Naive thymus-derived CD4-positive, alpha-beta T cell (primary cell): ENCODE measurements at regions of chr5 and their contacts with region 1.

Region 1: GRCh38 chr5:157917899-157918809 is 59.2 kb upstream of the CLINT1 start:
- DNase-seq: peak; percentile 11 to 56 (median 22)
- ATAC-seq: peak; percentile 75
- H3K4me3 ChIP-seq: no peak overlapping the region
- H3K4me3 Mint-ChIP-seq: peak overlapping the region in 9 of 10 donors; percentile 7 to 87 (median 71)
- H3K27ac ChIP-seq: peak overlapping the region; percentile 31
- H3K27ac Mint-ChIP-seq: peak overlapping the region; percentile 40 to 90 (median 83)
- H3K4me1 ChIP-seq: peaks cover 5 to 11% of the 10 kb centered on the region in 2 donors
- H3K4me1 Mint-ChIP-seq: peaks cover 17 to 30% (median 28%) of the 10 kb centered on the region in 7 donors
- H3K27me3 ChIP-seq: no peaks in the 10 kb centered on the region
- H3K27me3 Mint-ChIP-seq: no peaks in the 10 kb centered on the region

Region 2: GRCh38 chr5:157785801-157786200 is 132.4 kb before region 1 on chr5:
- CTCF ChIA-PET with region 1: no interaction called
- POLR2A ChIA-PET with region 1: no interaction called
- intact Hi-C with region 1: no loop called
- DNase-seq: no peak
- ATAC-seq: no peak
- H3K4me3 ChIP-seq: no peak overlapping the region
- H3K4me3 Mint-ChIP-seq: no peak overlapping the region
- H3K27ac ChIP-seq: no peak overlapping the region
- H3K27ac Mint-ChIP-seq: no peak overlapping the region
- H3K4me1 ChIP-seq: no peaks in the 10 kb centered on the region
- H3K4me1 Mint-ChIP-seq: no peaks in the 10 kb centered on the region
- H3K27me3 ChIP-seq: no peaks in the 10 kb centered on the region
- H3K27me3 Mint-ChIP-seq: no peaks in the 10 kb centered on the region

Region 3: DNA sequence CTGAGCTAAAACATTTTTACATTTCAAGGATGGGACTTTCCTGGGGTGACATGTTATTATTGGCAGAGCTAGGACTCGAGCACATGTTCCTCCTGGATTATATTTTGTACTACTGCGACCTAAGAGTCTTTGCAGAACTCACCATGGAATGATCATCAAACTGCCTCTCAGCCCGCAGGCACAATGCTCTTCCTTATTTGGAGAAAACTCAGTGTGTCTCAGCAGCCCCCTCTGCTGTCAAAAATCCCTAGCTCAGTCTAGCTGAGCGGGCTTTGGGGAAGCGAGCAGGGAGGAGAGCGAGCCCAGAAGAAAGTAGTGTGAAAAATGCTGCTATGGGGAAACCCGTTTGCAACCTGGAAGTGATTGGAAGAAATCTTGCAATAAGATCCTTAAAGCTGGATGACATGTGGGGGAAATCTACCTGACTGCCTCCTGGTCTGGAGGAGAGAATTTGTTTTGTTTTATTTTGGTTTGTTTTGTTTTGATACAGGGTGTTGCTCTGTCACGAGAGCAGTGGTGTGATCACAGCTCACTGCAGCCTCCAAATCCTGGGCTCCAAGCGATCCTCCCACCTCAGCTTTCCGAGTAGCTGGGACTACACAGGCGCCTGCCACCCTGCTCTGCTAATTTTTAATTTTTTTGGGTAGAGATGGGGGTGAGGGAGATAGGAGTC is 30.7 kb after region 1 on chr5:
- CTCF ChIA-PET with region 1: no interaction called
- POLR2A ChIA-PET with region 1: no interaction called
- intact Hi-C with region 1: loop called in 1 of 2 experiments (anchors 2 kb)
- DNase-seq: peak; percentile 44 to 78 (median 69)
- ATAC-seq: peak; percentile 97
- H3K4me3 ChIP-seq: no peak overlapping the region
- H3K4me3 Mint-ChIP-seq: peak overlapping the region in 4 of 10 donors; percentile 1 to 44 (median 4)
- H3K27ac ChIP-seq: no peak overlapping the region
- H3K27ac Mint-ChIP-seq: no peak overlapping the region
- H3K4me1 ChIP-seq: no peaks in the 10 kb centered on the region
- H3K4me1 Mint-ChIP-seq: peaks cover 5 to 10% (median 6%) of the 10 kb centered on the region in 7 donors
- H3K27me3 ChIP-seq: no peaks in the 10 kb centered on the region
- H3K27me3 Mint-ChIP-seq: peaks cover 5 to 27% (median 9%) of the 10 kb centered on the region in 5 donors